MCF 10A (cell line): ENCODE measurements at regions of chr1 and their contacts with region 1.

Region 1: DNA sequence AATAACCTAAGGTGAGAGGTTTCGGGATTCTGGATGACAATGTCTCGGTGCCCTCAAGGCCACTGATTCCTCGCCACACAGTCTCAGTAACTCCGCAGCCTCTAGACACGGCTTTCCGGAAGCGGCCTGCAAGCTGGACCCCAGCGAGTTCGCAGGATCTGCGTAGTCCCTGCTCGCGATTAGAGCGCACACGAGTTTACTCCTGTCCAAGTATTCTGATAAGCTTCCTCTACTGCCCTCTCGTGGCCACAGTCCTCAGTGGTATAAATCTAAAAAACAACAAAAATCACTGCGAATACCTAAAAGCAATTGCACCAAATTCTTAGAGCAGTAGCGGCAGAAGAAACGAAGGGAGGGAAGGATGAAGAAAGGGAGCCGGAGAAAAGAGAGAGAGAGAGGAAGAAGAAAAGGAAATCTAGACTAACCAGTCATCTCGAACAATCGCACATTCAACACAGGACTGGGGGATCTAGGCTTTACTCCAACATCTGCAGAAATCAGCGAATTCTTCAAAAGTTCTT is 1.1 kb upstream of the PLXNA2 start:
- DNase-seq: peak; percentile 98
- H3K4me3 Mint-ChIP-seq: peak overlapping the region; percentile 94
- H3K27ac Mint-ChIP-seq: no peak overlapping the region
- H3K4me1 Mint-ChIP-seq: peaks cover 26% of the 10 kb centered on the region
- H3K27me3 Mint-ChIP-seq: no peaks in the 10 kb centered on the region
- CTCF ChIP-seq: peak; percentile 94

Region 2: DNA sequence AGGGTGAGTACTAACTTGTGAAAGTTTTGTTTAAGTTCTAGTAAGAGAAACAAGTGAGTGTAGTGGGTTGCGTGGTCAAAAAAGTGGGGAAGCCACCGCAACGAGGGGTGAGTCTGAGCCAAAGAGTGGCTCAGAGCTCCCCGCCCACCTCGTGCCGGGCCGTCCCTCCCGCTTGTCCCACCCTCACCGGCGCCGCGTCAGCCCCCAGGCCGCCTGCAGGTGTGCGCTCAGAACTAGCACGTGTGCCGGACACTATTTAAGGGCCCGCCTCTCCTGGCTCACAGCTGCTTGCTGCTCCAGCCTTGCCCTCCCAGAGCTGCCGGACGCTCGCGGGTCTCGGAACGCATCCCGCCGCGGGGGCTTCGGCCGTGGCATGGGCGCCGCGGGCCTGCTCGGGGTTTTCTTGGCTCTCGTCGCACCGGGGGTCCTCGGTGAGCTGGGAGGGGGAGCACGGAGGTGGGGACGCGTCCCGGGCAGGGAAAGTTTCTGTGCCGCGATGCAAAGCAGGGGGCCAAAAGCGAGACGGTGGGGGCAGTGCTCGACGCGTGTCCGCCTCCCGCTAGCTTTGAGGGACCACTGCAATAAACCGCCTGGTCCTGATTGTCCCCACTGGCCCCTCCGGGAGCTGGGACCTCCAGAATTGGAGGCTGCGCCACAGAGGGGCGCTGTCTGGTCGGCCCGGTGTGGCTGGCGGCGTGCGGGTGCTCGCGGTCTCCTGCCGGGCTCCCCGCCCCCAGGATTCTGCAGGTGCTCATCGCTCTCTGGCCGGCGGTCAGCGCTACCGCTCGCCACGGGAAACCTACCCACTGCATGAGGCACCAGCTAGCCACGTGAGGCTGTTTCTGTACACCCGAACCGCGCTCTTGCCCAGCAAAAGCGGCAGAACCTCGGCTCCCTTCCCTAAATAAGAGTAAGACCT is 790.9 kb before region 1 on chr1 and contains the start of gene CR2:
- CTCF ChIA-PET with region 1: no interaction called
- POLR2A ChIA-PET with region 1: no interaction called
- intact Hi-C with region 1: no loop called
- DNase-seq: peak; percentile 72
- H3K4me3 Mint-ChIP-seq: peak within 1 kb of the TSS; percentile 39
- H3K27ac Mint-ChIP-seq: no peak within 1 kb of the TSS
- H3K4me1 Mint-ChIP-seq: no peaks in the 10 kb centered on the region
- H3K27me3 Mint-ChIP-seq: peaks cover 49% of the 10 kb centered on the region
- CTCF ChIP-seq: no peak
- total RNA-seq, gene CR2: not detected in 2 replicates

Region 3: DNA sequence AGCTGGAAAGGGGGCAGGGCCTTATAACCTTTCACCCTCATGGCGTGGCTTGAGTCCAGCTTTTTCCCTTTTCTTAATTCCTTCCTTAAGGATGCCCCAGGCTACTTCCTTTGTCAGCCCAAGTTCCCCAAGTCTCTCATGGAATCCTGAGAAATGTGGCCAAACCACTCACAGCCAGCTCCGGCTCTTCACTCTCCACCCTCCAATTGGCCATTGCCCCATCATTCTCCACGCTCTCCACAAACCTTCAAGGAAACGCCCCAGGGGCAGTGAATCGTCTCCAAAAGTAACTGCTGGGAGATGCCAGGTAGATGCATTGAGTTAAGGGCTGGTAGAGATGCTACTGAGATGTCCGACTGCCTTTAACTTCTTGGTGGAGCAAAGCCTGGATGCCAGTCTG is 220.8 kb before region 1 on chr1:
- CTCF ChIA-PET with region 1: interaction called, 688 read pairs
- POLR2A ChIA-PET with region 1: interaction called, 111 read pairs
- intact Hi-C with region 1: loop called (anchors 1 kb)
- DNase-seq: peak; percentile 21
- H3K4me3 Mint-ChIP-seq: no peak overlapping the region
- H3K27ac Mint-ChIP-seq: peak overlapping the region; percentile 41
- H3K4me1 Mint-ChIP-seq: no peaks in the 10 kb centered on the region
- H3K27me3 Mint-ChIP-seq: peaks cover 8% of the 10 kb centered on the region
- CTCF ChIP-seq: no peak

Region 4: GRCh38 chr1:208085655-208086515 is 159.4 kb before region 1 on chr1:
- CTCF ChIA-PET with region 1: interaction called, 49 read pairs
- POLR2A ChIA-PET with region 1: interaction called, 8 read pairs
- intact Hi-C with region 1: no loop called
- DNase-seq: no peak
- H3K4me3 Mint-ChIP-seq: no peak overlapping the region
- H3K27ac Mint-ChIP-seq: peak overlapping the region; percentile 5
- H3K4me1 Mint-ChIP-seq: peaks cover 11% of the 10 kb centered on the region
- H3K27me3 Mint-ChIP-seq: no peaks in the 10 kb centered on the region
- CTCF ChIP-seq: no peak

Region 5: DNA sequence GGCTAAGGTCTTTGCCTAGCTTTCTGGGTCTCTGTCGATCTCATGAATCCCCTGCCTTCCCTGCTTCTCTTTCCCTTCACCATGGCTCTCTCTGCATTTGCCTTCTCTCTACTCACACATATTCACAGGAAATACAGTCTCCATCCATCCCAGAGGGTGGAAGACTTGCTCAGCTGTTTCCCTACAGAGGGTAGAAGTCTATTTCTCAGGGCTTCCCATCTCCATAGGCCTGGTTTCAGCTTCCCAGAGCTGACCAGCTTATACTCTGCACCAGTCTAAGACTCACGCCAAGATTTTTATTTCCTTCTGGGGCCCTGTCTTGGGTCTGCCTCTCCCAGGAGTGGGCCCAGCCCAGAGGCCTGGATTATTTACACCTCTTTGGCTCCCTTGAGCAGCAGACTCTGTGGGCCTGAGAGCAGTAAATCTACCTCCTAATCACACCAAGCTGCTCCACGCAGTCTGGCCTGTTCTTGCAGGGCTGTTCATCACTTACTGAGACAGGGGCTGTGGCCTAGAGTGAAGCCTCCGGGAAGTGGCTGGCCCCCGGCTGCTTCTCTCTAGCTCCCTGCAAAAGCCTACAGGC is 103.5 kb before region 1 on chr1:
- CTCF ChIA-PET with region 1: interaction called, 297 read pairs
- POLR2A ChIA-PET with region 1: interaction called, 12 read pairs
- intact Hi-C with region 1: no loop called
- DNase-seq: no peak
- H3K4me3 Mint-ChIP-seq: no peak overlapping the region
- H3K27ac Mint-ChIP-seq: no peak overlapping the region
- H3K4me1 Mint-ChIP-seq: peaks cover 6% of the 10 kb centered on the region
- H3K27me3 Mint-ChIP-seq: no peaks in the 10 kb centered on the region
- CTCF ChIP-seq: no peak

Region 6: DNA sequence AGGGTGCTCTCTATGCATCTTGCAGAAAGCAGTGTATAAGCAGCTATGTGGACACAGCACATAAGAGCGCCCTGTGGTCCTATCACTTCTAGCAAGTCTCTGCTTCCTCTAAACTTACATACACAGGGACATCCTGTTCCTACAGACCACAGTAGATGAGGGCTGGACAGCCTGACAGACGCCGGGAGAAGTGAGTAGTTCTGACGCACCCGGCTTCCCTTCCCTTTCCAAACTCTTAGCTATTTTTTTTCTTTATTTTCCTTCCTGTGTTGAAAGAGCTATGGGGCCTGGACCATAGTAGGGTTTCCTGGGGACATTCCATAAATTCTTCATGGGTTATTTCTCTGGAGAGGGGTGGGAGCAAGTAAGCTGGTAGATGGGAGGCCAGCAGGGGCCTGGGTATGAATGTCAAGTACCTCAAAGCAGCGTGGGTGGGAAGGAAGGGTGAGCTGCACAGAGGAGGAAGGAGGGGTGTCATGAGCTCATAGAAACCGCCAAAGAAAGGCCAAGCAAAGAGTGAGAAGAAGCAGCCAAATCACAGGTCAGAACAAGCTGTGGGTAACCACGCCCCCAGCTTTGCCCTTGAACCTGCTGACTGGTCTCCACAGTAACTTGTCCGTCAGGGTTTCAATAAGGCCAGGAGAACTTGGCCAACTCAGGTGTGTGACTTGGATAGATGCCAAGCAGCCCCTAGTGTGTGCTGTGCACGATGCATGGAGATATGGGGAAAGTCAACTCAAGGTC is 37.7 kb before region 1 on chr1:
- CTCF ChIA-PET with region 1: interaction called, 1,037 read pairs
- POLR2A ChIA-PET with region 1: interaction called, 138 read pairs
- intact Hi-C with region 1: loop called (anchors 1 kb)
- DNase-seq: peak; percentile 100
- H3K4me3 Mint-ChIP-seq: peak overlapping the region; percentile 43
- H3K27ac Mint-ChIP-seq: peak overlapping the region; percentile 89
- H3K4me1 Mint-ChIP-seq: peaks cover 30% of the 10 kb centered on the region
- H3K27me3 Mint-ChIP-seq: no peaks in the 10 kb centered on the region
- CTCF ChIP-seq: no peak

Region 7: DNA sequence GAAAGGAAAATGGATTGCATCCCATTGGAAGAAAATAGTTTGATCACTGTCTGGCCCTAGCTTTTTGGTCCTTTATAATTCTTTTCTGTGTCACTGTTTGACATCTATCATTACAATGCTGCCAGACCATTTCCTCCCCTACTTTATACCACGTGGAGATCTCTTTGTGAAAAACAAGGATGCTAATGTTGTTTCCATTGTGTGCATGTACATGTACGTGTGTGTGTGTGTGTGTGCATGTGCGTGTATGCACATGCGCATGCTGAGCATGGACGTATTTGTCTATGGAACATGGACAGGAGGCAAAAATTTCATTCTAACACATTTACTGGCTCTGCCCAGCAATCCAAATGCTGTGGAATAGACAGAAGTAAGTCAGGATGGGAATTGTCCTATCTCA is 152.0 kb after region 1 on chr1:
- CTCF ChIA-PET with region 1: no interaction called
- POLR2A ChIA-PET with region 1: no interaction called
- intact Hi-C with region 1: no loop called
- DNase-seq: no peak
- H3K4me3 Mint-ChIP-seq: no peak overlapping the region
- H3K27ac Mint-ChIP-seq: no peak overlapping the region
- H3K4me1 Mint-ChIP-seq: no peaks in the 10 kb centered on the region
- H3K27me3 Mint-ChIP-seq: no peaks in the 10 kb centered on the region
- CTCF ChIP-seq: no peak

Region 8: GRCh38 chr1:209248649-209249279 is 1003.5 kb after region 1 on chr1:
- CTCF ChIA-PET with region 1: interaction called, 21 read pairs
- POLR2A ChIA-PET with region 1: interaction called, 3 read pairs
- intact Hi-C with region 1: loop called (anchors 2 kb)
- DNase-seq: peak; percentile 91
- H3K4me3 Mint-ChIP-seq: no peak overlapping the region
- H3K27ac Mint-ChIP-seq: no peak overlapping the region
- H3K4me1 Mint-ChIP-seq: peaks cover 5% of the 10 kb centered on the region
- H3K27me3 Mint-ChIP-seq: no peaks in the 10 kb centered on the region
- CTCF ChIP-seq: peak; percentile 99